Aorta (tissue), 5 donors: ENCODE measurements at regions of chr4 and their contacts with region 1.

Region 1: DNA sequence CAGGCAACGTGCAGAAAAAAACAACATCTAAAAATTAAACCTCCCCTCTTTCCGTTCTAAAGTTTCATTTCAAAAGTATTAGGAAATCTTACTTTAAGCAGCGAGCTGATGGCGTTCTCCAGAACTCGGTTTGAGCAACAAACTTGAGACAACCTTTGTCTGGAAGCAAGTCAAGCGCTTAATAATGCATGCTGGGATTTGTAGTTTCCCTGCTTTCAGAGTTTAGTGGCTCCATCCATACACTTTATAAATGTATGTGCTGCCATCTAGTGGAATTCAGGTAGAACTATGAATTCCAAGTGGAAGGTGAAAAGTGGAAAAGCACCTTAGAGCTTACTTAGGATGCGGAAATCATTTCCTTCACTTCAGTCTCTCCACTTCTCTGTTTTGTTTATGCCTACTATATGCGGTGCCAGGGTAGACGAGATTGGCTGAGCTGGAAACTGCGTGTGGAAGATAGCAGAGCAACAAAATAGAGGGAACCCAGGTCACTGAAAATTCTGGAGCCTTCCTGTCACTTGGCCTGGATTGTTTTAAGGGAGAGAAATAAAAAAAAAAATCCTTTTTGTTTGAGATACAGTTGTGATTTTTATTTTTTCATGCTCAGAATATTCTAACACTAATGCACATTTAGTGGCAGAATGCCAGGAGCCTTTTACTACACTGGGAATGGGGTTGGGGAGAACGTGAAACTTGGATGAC is at the start of gene BDH2:
- DNase-seq: no peak
- ATAC-seq: peak; percentile 96
- H3K4me3 ChIP-seq: peak within 1 kb of the TSS; percentile 89 to 96
- H3K27ac ChIP-seq: peak within 1 kb of the TSS; percentile 48 to 79
- H3K4me1 ChIP-seq: peaks cover 0 to 4% of the 10 kb centered on the region in 2 donors
- H3K27me3 ChIP-seq: no peaks in the 10 kb centered on the region
- total RNA-seq, gene BDH2: 44.1 to 63.8 TPM

Region 2: GRCh38 chr4:102344954-102345794 is 754.7 kb before region 1 on chr4 and contains the start of gene SLC39A8:
- intact Hi-C with region 1: loop called in 1 of 2 experiments (anchors 10 kb)
- DNase-seq: peak; percentile 92 to 95
- ATAC-seq: peak; percentile 96
- H3K4me3 ChIP-seq: peak within 1 kb of the TSS; percentile 68 to 88
- H3K27ac ChIP-seq: no peak within 1 kb of the TSS
- H3K4me1 ChIP-seq: no peaks in the 10 kb centered on the region
- H3K27me3 ChIP-seq: no peaks in the 10 kb centered on the region
- total RNA-seq, gene SLC39A8: 16.5 to 31.3 TPM

Region 3: DNA sequence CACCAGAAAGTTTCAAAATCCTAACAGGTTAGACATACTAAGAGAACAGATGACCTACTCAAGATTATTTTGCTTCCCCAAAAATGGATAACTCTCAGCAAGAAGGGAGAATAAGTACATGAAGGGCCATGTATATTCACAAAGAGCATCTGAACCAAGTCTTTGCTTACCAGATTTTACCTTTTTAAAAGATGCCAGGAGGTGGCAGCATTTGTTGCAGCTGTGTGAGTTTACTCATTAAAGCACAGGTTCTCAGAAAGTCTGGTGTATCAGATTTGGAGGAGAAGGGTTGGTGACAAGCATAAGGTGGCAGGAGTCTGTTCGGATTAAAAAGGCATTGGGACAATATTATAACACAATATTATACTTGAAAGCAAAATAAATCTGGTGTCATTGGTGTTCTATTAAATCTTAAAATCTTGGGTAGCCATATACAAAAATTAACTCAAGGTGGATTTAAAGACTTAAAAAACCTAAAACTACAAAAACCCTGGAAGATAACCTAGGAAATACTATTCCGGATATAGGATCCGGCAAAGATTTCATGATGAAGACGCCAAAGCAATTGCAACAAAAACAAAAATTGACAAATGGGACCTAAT is 650.0 kb before region 1 on chr4:
- intact Hi-C with region 1: loop called (anchors 10 kb)
- DNase-seq: no peak
- ATAC-seq: peak; percentile 54
- H3K4me3 ChIP-seq: no peak overlapping the region
- H3K27ac ChIP-seq: no peak overlapping the region
- H3K4me1 ChIP-seq: no peaks in the 10 kb centered on the region
- H3K27me3 ChIP-seq: no peaks in the 10 kb centered on the region

Region 4: GRCh38 chr4:102620697-102621497 is 478.9 kb before region 1 on chr4:
- intact Hi-C with region 1: loop called in 1 of 2 experiments (anchors 5 kb)
- DNase-seq: no peak
- ATAC-seq: peak; percentile 88
- H3K4me3 ChIP-seq: no peak overlapping the region
- H3K27ac ChIP-seq: peak overlapping the region in 1 of 2 donors; percentile 58
- H3K4me1 ChIP-seq: peaks cover 0 to 2% of the 10 kb centered on the region in 2 donors
- H3K27me3 ChIP-seq: no peaks in the 10 kb centered on the region

Region 5: DNA sequence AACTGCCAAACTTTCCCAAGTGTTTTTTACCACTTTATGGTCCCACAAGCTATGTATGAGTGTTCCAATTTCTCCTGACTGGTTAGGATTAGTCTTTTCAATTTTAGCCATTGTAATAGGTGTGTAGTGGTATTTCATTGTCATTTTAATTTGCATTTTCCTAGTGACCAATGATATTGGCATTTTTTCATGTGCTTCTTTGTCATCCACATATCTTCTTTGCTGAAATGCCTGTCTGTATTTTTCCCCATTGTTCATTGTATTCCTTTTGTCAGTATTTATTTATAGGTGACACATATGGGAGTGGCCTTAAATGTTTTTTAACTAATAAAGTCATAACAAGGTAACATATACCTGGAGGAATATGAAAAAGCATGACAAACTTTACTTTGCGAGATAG is 263.2 kb before region 1 on chr4:
- intact Hi-C with region 1: no loop called
- DNase-seq: no peak
- ATAC-seq: no peak
- H3K4me3 ChIP-seq: no peak overlapping the region
- H3K27ac ChIP-seq: no peak overlapping the region
- H3K4me1 ChIP-seq: no peaks in the 10 kb centered on the region
- H3K27me3 ChIP-seq: no peaks in the 10 kb centered on the region

Region 6: GRCh38 chr4:103046416-103047290 is 53.2 kb before region 1 on chr4:
- intact Hi-C with region 1: loop called (anchors 2 to 5 kb)
- DNase-seq: no peak
- ATAC-seq: peak; percentile 78
- H3K4me3 ChIP-seq: no peak overlapping the region
- H3K27ac ChIP-seq: no peak overlapping the region
- H3K4me1 ChIP-seq: no peaks in the 10 kb centered on the region
- H3K27me3 ChIP-seq: no peaks in the 10 kb centered on the region